HAP-1 (cell line): ENCODE measurements at regions of chr10 and their contacts with region 1.

Region 1: DNA sequence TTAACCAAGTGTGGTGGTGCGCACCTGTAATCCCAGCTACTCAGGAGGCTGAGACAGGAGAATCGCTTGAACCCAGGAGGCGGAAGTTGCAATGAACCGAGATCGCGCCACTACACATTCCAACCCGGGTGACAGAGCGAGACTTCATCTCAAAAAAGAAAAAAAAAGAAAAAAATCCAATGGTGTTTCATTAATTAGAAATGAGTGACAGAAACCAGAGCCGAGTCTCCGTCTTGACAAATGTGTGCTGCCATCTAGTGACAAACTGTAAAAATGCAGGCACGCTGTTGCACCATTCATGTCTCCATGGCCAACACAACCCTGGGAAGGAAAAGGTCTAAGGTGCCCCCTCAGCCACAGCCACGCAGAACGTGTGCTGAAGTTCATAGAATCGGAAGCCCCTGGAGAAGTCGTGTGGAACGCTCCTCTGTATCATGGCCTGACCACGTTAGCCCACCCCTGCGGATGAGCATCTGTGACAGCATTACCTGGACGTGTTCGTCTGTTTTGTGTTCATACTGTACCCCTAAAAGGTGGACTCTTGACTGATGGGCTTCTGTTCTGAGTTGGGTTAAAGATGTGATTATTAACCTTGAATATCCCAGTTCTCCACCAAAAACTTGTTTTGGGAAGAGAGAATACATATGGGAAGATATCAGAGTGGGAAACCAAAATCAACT is 94.9 kb downstream of the LYZL2 start:
- DNase-seq: peak; percentile 68 to 78
- H3K4me3 ChIP-seq: no peak overlapping the region
- H3K4me1 ChIP-seq: peaks cover 9% of the 10 kb centered on the region
- H3K27me3 ChIP-seq: no peaks in the 10 kb centered on the region

Region 2: GRCh38 chr10:28984431-28984830 is 1550.2 kb before region 1 on chr10:
- in situ Hi-C with region 1: no loop called
- DNase-seq: no peak
- H3K4me3 ChIP-seq: no peak overlapping the region
- H3K4me1 ChIP-seq: no peaks in the 10 kb centered on the region
- H3K27me3 ChIP-seq: peaks cover 3% of the 10 kb centered on the region; the same call in 1 of the 2 replicates

Region 3: DNA sequence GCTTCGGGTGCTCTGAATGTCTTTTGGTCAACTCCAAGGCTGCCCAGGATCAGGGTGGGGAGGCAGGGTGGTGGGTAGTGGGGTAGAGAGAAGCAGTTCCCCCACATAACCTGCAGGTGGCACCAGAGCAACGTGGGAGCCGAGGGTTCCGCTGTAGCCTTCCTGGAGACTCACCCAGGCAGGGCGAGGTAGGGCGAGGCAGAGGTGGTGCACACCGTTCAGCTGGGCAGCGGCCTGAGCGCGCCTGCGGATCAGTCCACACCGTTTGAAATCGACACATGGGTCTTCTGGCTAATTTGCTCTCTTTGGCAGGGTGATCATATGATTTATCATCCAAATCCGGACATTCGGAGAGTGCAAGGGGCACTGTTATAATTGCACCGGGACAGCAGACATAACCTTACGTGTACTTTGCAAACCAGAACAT is 142.0 kb before region 1 on chr10:
- in situ Hi-C with region 1: loop called (anchors 10 kb)
- DNase-seq: peak; percentile 60 to 89
- H3K4me3 ChIP-seq: no peak overlapping the region
- H3K4me1 ChIP-seq: no peaks in the 10 kb centered on the region
- H3K27me3 ChIP-seq: no peaks in the 10 kb centered on the region

Region 4: DNA sequence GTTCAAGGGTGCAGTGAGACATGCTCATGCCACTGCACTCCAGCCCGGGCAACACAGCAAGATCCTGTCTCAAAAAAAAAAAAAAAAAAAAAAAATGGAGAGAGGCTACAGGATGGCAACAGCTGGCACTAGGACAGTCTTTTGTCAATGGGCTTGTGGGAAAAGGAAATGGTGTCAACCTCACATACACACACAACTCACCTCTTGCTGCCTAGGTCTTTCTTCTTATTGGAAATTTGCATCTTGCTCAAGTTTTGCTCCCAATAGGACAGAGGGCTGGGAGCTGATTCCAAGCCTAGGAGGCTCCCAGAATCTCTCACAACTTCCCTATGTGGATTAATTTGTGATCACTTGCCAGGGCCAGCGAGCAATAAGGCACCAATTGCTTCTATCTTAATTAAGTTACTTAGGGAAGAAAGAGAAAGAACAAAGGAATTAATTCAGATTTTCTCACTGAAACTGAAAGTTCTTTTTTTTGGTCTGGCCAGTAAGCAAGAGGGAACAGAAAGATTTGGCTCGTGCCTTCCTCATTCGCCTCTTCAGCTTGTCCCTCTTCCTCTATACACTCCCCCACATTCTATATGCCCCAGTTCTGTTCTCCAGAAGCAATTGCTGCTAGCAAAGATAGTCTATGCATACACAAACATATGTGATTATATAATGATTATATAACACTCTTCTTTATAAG is 66.8 kb before region 1 on chr10:
- in situ Hi-C with region 1: no loop called
- DNase-seq: no peak
- H3K4me3 ChIP-seq: no peak overlapping the region
- H3K4me1 ChIP-seq: no peaks in the 10 kb centered on the region
- H3K27me3 ChIP-seq: no peaks in the 10 kb centered on the region